ENCODE measurements at regions of chr19 and their contacts with region 1.

Region 1: DNA sequence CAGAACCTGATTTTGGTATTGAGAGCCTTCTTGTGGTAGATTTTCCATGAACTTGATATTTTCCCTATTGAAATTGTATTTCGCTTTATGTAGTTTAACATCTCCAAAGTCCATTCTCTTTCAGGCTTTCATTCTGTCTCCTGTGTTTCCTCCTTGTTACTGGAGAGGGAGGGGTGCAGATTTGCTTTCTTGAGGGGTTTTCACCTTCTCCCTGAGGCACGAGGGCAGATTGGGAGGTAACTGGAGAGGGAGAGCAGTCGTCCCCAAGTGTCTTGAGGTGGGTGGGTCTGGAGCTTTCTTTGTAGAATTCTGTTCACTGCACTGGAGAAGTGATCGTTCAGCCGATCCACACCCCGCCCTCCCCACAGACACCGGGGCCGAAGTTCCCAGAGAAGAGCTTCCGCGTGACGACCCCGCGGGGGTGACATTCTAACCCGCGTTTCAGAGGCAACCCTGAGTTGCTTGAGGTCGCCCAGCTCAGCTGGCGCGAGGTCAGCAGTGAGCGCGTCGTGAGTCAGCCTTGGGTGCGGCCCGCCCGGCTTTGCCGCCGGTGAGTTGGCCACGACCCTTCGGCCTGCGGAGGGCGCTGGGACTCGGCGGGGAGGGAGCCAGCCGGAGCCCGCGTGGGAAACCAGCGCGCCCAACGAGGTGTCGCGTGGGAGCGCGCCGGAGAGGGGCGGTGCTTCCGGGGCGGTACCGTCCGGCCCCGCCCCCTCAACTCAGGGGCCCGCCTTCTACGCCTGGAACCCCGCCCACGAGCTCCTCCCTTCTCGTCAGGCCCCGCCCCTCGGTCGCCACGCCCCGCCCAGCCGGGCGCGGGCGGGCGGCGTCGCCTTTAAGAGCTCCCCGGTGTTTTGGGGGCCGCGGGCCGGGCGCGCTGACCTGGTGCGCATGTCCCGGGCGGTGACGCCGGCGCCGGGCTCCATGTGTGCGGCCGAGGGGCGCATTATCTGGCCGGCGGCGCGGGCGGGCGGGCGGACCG is at the start of gene GATAD2A:
- DNase-seq: peak; percentile 89 to 95 (median 94)
- ATAC-seq: peak; percentile 87
- H3K4me3 ChIP-seq: peak within 1 kb of the TSS; percentile 78
- H3K27ac ChIP-seq: peak within 1 kb of the TSS; percentile 91
- H3K4me1 ChIP-seq: peaks cover 40 to 53% of the 10 kb centered on the region in 2 experiments
- H3K27me3 ChIP-seq: no peaks in the 10 kb centered on the region
- CTCF ChIP-seq: peak; percentile 47 to 72 (median 64); a peak in 5 of 6 replicates
- EP300 ChIP-seq: no peak
- POLR2A ChIP-seq: peak; percentile 58
- RAD21 ChIP-seq: peak; percentile 45 to 59
- polyA plus RNA-seq, gene GATAD2A: 2.4 to 5.1 TPM

Region 2: GRCh38 chr19:19280561-19280960 is 124.6 kb before region 1 on chr19:
- CTCF ChIA-PET with region 1: no interaction called
- POLR2A ChIA-PET with region 1: no interaction called
- in situ Hi-C with region 1: no loop called
- intact Hi-C with region 1: no loop called
- DNase-seq: no peak
- ATAC-seq: no peak
- H3K4me3 ChIP-seq: no peak overlapping the region
- H3K27ac ChIP-seq: no peak overlapping the region
- H3K4me1 ChIP-seq: peaks cover 0 to 3% of the 10 kb centered on the region in 2 experiments; a peak in 2 of 5 replicates
- H3K27me3 ChIP-seq: no peaks in the 10 kb centered on the region
- CTCF ChIP-seq: no peak
- EP300 ChIP-seq: no peak
- POLR2A ChIP-seq: no peak
- RAD21 ChIP-seq: no peak

Region 3: GRCh38 chr19:19366612-19367396 is 38.4 kb before region 1 on chr19:
- CTCF ChIA-PET with region 1: no interaction called
- POLR2A ChIA-PET with region 1: interaction called, 3 read pairs
- in situ Hi-C with region 1: no loop called
- intact Hi-C with region 1: loop called (anchors 2 kb)
- DNase-seq: peak; percentile 79 to 94 (median 82)
- ATAC-seq: peak; percentile 93
- H3K4me3 ChIP-seq: no peak overlapping the region
- H3K27ac ChIP-seq: peak overlapping the region; percentile 70
- H3K4me1 ChIP-seq: peaks cover 9 to 32% of the 10 kb centered on the region in 2 experiments; a peak in 4 of 5 replicates
- H3K27me3 ChIP-seq: no peaks in the 10 kb centered on the region
- CTCF ChIP-seq: peak; percentile 94 to 99 (median 95)
- EP300 ChIP-seq: peak; percentile 51
- POLR2A ChIP-seq: peak; percentile 59
- RAD21 ChIP-seq: peak; percentile 88 to 97

Region 4: GRCh38 chr19:19385108-19385899 is 19.9 kb before region 1 on chr19:
- CTCF ChIA-PET with region 1: no interaction called
- POLR2A ChIA-PET with region 1: interaction called, 24 read pairs
- in situ Hi-C with region 1: no loop called
- intact Hi-C with region 1: loop called (anchors 2 kb)
- DNase-seq: peak; percentile 95 to 100 (median 96)
- ATAC-seq: peak; percentile 93
- H3K4me3 ChIP-seq: peak overlapping the region; percentile 96
- H3K27ac ChIP-seq: peak overlapping the region; percentile 97
- H3K4me1 ChIP-seq: peaks cover 28 to 31% of the 10 kb centered on the region in 2 experiments; a peak in 4 of 5 replicates
- H3K27me3 ChIP-seq: no peaks in the 10 kb centered on the region
- CTCF ChIP-seq: peak in 2 of 3 experiments; percentile 25 to 38; a peak in 3 of 6 replicates
- EP300 ChIP-seq: no peak; the same call in 1 of the 2 replicates
- POLR2A ChIP-seq: peak; percentile 89
- RAD21 ChIP-seq: peak; percentile 8 to 48; a peak in 2 of 4 replicates

Region 5: GRCh38 chr19:19418555-19419260 is 13.5 kb after region 1 on chr19:
- CTCF ChIA-PET with region 1: no interaction called
- POLR2A ChIA-PET with region 1: interaction called, 27 read pairs
- in situ Hi-C with region 1: no loop called
- intact Hi-C with region 1: no loop called
- DNase-seq: peak in 1 of 4 experiments; percentile 25
- ATAC-seq: peak; percentile 18; the same call in 2 of the 3 replicates
- H3K4me3 ChIP-seq: no peak overlapping the region
- H3K27ac ChIP-seq: no peak overlapping the region
- H3K4me1 ChIP-seq: peaks cover 0 to 19% of the 10 kb centered on the region in 2 experiments; a peak in 2 of 5 replicates
- H3K27me3 ChIP-seq: no peaks in the 10 kb centered on the region
- CTCF ChIP-seq: no peak
- EP300 ChIP-seq: no peak
- POLR2A ChIP-seq: no peak
- RAD21 ChIP-seq: no peak

Region 6: GRCh38 chr19:19429361-19429760 is 24.2 kb after region 1 on chr19:
- CTCF ChIA-PET with region 1: no interaction called
- POLR2A ChIA-PET with region 1: interaction called, 19 read pairs
- in situ Hi-C with region 1: no loop called
- intact Hi-C with region 1: no loop called
- DNase-seq: no peak
- ATAC-seq: no peak
- H3K4me3 ChIP-seq: no peak overlapping the region
- H3K27ac ChIP-seq: no peak overlapping the region
- H3K4me1 ChIP-seq: peaks cover 0 to 15% of the 10 kb centered on the region in 2 experiments; a peak in 3 of 5 replicates
- H3K27me3 ChIP-seq: no peaks in the 10 kb centered on the region
- CTCF ChIP-seq: no peak
- EP300 ChIP-seq: no peak
- POLR2A ChIP-seq: no peak
- RAD21 ChIP-seq: no peak

Region 7: DNA sequence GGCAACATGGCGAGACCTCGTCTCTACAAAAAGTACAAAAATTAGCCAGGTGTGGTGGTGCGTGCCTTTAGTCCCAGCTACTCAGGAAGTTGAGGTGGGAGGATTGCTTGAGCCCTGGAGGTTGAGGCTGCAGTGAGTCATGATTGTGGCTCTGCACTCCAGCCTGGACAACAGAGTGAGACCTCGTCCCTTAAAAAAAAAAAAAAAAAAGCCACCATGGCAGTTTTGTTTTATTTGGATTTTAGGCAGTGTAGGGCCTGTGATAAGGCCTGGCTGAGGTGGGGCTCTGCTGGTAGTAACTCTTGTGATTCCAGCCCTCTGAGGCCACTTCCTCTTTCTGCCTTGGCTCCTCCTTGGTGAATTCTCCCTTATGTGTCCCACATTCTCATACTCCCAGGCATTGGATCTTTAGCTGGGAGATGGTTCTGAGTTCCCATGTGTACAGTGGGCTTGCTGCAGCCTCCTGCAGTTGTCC is 39.5 kb after region 1 on chr19:
- CTCF ChIA-PET with region 1: no interaction called
- POLR2A ChIA-PET with region 1: interaction called, 6 read pairs
- in situ Hi-C with region 1: no loop called
- intact Hi-C with region 1: loop called (anchors 5 kb)
- DNase-seq: peak in 2 of 4 experiments; percentile 79 to 85
- ATAC-seq: peak; percentile 91
- H3K4me3 ChIP-seq: no peak overlapping the region
- H3K27ac ChIP-seq: peak overlapping the region; percentile 73
- H3K4me1 ChIP-seq: peaks cover 46 to 47% of the 10 kb centered on the region in 2 experiments
- H3K27me3 ChIP-seq: no peaks in the 10 kb centered on the region
- CTCF ChIP-seq: no peak
- EP300 ChIP-seq: peak; percentile 74
- POLR2A ChIP-seq: no peak
- RAD21 ChIP-seq: no peak

Region 8: DNA sequence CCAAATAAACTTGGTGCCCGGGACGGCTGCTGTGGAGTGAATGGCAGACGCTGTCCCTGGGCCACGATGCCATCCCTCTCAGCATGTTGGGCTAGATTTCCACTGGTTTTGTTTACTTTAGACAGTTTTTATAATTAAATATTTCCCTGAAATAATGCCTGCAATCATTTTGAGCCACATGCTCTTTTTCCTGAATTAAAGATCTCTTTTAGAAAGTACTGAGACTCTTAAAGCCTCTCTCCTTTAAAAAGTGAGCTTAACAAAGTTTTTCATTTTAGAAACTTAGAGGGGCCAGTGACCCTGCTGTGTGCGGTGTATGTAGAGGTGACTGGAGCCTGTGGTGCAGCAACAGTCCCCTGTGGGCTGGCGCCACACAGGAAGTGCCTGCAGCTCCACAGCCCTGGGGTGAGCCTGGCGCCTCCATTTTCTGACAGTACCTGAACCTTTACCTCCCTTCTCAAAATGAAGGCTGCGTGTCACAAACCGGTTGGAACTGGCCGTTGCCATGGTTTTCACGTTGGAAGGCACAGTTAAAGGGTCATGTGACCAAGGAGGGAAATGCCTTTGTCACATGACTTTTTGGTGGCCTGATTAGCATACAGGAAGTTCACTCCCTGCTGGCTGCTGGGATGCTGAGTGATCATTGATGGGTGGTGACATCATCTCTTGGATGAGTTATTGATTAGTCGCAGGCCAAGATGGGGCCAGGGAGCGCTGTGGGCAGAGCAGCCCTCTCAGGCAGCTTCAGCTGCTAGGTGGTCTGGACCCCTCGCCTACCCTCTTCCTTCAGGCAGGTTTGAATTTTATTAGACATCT is 83.9 kb after region 1 on chr19:
- CTCF ChIA-PET with region 1: interaction called, 4 read pairs
- POLR2A ChIA-PET with region 1: interaction called, 4 read pairs
- in situ Hi-C with region 1: no loop called
- intact Hi-C with region 1: loop called (anchors 1 kb)
- DNase-seq: peak; percentile 78 to 94 (median 82)
- ATAC-seq: peak; percentile 83
- H3K4me3 ChIP-seq: no peak overlapping the region; the same call in 1 of the 2 replicates
- H3K27ac ChIP-seq: peak overlapping the region; percentile 90
- H3K4me1 ChIP-seq: peaks cover 38 to 54% of the 10 kb centered on the region in 2 experiments
- H3K27me3 ChIP-seq: no peaks in the 10 kb centered on the region
- CTCF ChIP-seq: no peak
- EP300 ChIP-seq: peak; percentile 41; the same call in 1 of the 2 replicates
- POLR2A ChIP-seq: peak; percentile 52; the same call in 1 of the 2 replicates
- RAD21 ChIP-seq: no peak

Measured in K562 (cell line).